Ovary (tissue), 10 donors: ENCODE measurements at regions of chr5 and their contacts with region 1.

Region 1: GRCh38 chr5:66324357-66324756 is 180.3 kb downstream of the SREK1 start:
- DNase-seq: no peak
- H3K4me3 ChIP-seq: no peak overlapping the region
- H3K27ac ChIP-seq: no peak overlapping the region
- H3K4me1 ChIP-seq: no peaks in the 10 kb centered on the region
- H3K27me3 ChIP-seq: no peaks in the 10 kb centered on the region
- CTCF ChIP-seq: no peak
- EP300 ChIP-seq: no peak
- POLR2A ChIP-seq: no peak

Region 2: DNA sequence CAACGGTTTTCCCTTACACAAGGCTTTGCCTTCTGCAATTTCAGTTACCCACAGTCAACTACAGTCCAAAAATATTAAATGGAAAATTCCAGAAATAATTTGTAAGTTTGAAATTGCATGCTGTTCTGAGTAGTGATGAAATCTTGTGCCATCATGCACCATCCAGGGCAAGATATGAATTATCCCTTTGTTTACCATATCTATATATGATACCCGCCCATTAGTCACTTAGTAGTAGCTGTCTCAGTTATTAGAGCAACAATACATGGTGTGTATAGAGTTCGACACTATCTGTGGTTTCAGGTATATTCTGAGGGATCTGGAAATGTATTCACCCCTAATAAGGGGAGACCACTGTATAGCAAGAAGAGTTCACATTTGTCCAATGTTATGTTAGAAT is 368.6 kb before region 1 on chr5:
- intact Hi-C with region 1: no loop called
- DNase-seq: no peak
- H3K4me3 ChIP-seq: no peak overlapping the region
- H3K27ac ChIP-seq: no peak overlapping the region
- H3K4me1 ChIP-seq: peaks cover 5% of the 10 kb centered on the region
- H3K27me3 ChIP-seq: no peaks in the 10 kb centered on the region
- CTCF ChIP-seq: no peak
- EP300 ChIP-seq: no peak
- POLR2A ChIP-seq: no peak

Region 3: DNA sequence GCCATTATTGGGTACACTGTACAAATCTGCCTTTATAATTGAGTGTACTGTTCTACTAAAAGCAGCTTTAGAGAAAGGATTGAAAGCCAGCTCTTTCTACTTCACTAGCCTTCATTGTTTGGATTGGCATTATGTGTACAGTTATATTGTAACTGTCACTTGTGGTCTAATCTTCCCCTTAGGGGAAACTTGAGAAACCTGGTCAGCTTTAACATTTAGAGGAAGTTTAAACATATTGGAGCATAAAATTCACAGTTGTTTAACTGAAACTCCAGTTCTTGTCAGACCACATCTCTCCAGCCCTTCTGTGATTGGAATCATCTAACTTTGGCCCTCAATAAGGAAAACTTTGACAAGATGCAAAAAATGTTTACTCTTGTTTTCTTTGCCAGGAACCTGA is 1915.8 kb after region 1 on chr5:
- intact Hi-C with region 1: loop called in 1 of 4 experiments (anchors 10 kb)
- DNase-seq: no peak
- H3K4me3 ChIP-seq: no peak overlapping the region
- H3K27ac ChIP-seq: peak overlapping the region in 1 of 2 donors; percentile 60
- H3K4me1 ChIP-seq: peaks cover 15% of the 10 kb centered on the region
- H3K27me3 ChIP-seq: no peaks in the 10 kb centered on the region
- CTCF ChIP-seq: no peak
- EP300 ChIP-seq: no peak
- POLR2A ChIP-seq: no peak